ENCODE measurements at regions of chr3 and their contacts with region 1.

Region 1: DNA sequence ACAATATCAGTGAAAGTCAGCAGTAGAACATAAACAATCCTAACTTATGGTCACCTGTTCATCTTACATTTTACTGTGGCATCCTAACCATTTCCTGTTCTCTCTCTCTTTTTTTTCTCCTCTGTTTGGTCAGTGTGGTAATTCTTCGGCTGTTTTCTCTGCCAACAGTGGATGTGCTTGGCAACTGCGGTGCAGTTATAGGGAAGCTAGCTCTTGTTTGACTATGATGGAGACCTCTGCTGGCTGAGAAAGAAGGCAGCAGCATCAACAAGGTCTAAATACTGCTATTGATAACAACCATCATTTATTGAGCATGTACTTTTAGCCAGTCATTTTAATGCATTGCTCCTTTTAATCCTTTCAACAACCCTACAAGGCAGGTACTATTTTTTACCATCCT is 723 bp upstream of the DRD3 start:
- DNase-seq: peak; percentile 35
- H3K4me3 ChIP-seq: no peak overlapping the region
- H3K27ac ChIP-seq: no peak overlapping the region
- H3K4me1 ChIP-seq: no peaks in the 10 kb centered on the region
- CTCF ChIP-seq: peak; percentile 74

Region 2: GRCh38 chr3:114112696-114113095 is 66.9 kb before region 1 on chr3:
- CTCF ChIA-PET with region 1: no interaction called
- POLR2A ChIA-PET with region 1: interaction called, 3 read pairs
- intact Hi-C with region 1: loop called (anchors 10 kb)
- DNase-seq: no peak
- H3K4me3 ChIP-seq: no peak overlapping the region
- H3K27ac ChIP-seq: no peak overlapping the region
- H3K4me1 ChIP-seq: no peaks in the 10 kb centered on the region
- CTCF ChIP-seq: no peak